Psoas muscle (tissue), 8 donors: ENCODE measurements at regions of chr1 and their contacts with region 1.

Region 1: DNA sequence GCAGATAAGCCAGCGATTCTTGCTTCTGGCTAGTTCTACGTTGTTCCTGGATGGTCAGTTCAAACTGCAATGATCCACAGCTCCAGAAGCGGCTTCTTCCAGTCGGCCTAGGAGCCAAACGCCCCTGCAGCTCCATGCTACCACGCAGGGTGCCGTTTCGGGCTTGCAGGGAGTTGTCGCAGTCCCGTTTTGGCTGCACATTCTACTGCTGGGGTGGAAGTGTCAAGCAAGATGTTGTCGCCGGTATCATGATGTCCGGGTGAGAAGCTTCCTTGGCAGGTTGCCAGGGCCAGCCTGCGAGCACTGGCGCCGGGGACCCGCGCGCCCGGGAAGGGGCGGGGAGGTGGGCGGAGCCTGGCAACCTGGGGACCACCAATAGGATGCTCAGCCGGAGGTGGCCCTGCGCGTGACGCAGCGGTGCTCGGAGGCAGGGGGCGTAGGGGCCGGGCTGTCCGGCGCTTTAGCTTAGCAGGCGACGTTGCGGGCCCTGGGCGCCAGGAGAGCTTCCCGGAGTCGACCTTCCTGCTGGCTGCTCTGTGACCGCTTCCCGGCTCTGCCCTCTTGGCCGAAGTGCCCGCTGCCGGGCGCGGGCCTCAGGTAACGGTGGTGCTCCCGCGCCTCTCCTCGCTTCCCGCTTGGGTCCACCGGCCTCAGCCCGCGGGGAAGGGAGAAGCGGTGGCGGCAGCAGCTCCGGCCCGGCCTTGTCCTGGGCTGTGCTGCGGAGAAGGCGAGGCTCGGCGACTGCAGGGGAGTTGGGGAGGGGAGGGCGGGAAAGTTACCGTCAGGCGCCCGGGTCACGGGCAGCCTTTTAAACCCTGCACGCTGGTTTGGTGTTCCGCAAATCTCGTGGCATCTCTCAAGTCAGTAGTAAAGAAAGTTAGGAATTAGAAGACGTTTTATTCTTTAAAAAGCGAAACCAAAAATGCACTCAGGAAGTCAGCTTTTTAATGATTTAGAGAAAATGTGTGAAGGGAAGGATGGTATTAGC is at the start of gene SOAT1:
- DNase-seq: peak; percentile 97 to 98
- ATAC-seq: peak; percentile 98 to 99 (median 99)
- H3K4me3 ChIP-seq: peak within 1 kb of the TSS; percentile 87
- H3K27ac ChIP-seq: peak within 1 kb of the TSS; percentile 82
- H3K4me1 ChIP-seq: peaks cover 9% of the 10 kb centered on the region
- H3K27me3 ChIP-seq: no peaks in the 10 kb centered on the region
- CTCF ChIP-seq: no peak
- total RNA-seq, gene SOAT1: 7.6 to 21.0 (median 11.1) TPM

Region 2: GRCh38 chr1:179121159-179121938 is 172.3 kb before region 1 on chr1:
- intact Hi-C with region 1: loop called in 1 of 2 experiments (anchors 10 kb)
- DNase-seq: no peak
- ATAC-seq: peak in 2 of 4 donors; percentile 53 to 79
- H3K4me3 ChIP-seq: no peak overlapping the region
- H3K27ac ChIP-seq: no peak overlapping the region
- H3K4me1 ChIP-seq: no peaks in the 10 kb centered on the region
- H3K27me3 ChIP-seq: no peaks in the 10 kb centered on the region
- CTCF ChIP-seq: peak; percentile 62